HEK293T (cell line): ENCODE measurements at regions of chrX and their contacts with region 1.

Region 1: DNA sequence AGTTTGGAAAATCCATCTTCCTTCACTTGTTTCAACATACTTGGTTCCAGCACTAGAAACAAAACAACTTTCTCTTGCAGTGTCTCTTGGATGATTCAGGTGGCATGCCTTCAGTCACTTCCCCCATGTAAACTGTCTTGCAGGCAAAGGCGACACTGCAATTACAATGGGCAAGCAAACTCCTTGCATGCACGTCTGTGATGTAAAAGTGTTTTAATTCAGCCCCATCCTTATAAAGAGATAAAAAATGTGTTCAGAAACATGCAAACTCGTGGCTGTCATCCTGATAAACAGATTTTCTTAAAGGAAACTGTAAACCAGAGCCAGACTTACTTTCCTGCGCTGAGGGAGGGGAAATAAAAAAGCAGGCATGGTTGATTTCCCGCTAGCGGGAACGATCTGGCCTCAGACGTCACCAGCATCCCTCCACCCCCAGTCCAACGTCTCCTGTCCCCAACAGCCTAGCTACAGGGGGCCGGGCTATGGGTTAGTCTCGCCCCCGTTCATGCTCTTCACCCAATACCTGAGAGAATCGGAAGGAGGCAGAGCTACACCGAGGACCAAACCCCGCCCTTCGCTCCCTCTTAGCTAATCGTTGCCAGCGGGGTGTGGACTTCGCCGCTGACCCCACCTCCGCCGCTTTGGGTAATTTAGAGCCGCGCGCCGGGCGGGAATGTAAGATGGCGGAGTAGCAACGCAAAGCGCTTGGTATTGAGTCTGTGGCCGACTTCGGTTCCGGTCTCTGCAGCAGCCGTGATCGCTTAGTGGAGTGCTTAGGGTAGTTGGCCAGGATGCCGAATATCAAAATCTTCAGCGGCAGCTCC is at the start of gene PRPS1:
- DNase-seq: peak; percentile 96

Region 2: DNA sequence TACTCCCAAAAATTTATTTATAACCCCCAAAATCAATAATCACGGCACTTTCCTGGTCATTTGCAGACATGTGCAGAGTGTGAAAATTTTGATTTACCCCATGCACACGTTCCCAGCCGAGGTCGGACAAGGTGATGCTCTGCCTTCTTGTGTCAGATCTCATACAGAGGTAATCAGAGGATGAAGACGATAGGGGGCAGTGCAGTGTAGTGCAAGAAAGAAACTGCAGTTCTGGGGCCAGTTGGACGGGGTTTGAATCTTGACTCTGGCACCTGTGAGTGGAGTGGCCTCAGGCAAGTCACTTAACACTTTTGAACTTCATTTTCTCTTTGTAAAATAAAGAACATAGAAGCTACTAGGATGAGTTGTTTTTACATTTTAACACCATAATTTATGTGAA is 90.2 kb before region 1 on chrX:
- CTCF ChIA-PET with region 1: interaction called, 6 read pairs
- POLR2A ChIA-PET with region 1: interaction called, 21 read pairs
- DNase-seq: peak; percentile 72

Region 3: GRCh38 chrX:107646735-107647134 is 18.7 kb after region 1 on chrX:
- CTCF ChIA-PET with region 1: interaction called, 3 read pairs
- POLR2A ChIA-PET with region 1: interaction called, 20 read pairs
- DNase-seq: no peak

Region 4: GRCh38 chrX:107654872-107655761 is 27.1 kb after region 1 on chrX:
- CTCF ChIA-PET with region 1: interaction called, 13 read pairs
- POLR2A ChIA-PET with region 1: interaction called, 3 read pairs
- DNase-seq: peak; percentile 80